ENCODE measurements at regions of chr16 and their contacts with region 1.

Region 1: DNA sequence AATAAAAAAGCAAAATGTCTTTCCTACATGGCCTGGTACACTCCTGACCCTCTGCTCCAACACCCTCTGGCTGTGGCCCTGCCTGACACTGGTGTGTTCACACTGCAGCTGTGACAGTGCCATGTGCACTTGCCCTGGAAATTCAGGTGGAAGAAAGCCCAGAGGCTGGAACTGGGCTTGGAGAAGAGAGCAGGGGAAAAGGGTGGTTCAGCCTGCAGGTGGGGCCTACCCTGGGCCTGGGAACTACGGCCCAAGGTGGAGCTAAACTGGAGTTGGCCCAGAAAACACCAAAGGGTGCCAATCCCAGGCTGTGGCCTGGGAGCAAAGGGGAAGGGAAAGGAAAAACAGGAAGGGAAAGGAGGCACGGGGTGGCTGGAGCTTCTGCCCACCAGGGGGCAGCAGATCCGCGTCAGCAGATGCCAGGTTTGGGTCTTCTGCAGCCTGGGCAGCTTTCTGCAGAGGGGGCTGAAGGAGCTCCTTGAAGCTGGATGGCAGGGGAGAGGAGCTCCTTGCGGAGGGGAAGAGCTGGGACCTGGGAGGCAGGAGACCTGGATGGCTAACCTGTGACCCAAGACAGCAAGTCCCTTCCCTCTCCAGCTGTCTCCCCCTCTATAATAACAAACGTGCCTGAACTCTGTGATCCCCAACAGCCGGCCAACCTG is 15.4 kb upstream of the CTCF start:
- DNase-seq: peak; percentile 66 to 73 (median 69)
- H3K4me3 ChIP-seq: peak overlapping the region; percentile 41 to 48
- H3K4me3 Mint-ChIP-seq: peak overlapping the region; percentile 58 to 91 (median 82)
- H3K27ac ChIP-seq: peak overlapping the region; percentile 42
- H3K27ac Mint-ChIP-seq: peak overlapping the region; percentile 60 to 96 (median 95)
- H3K4me1 ChIP-seq: peaks cover 43% of the 10 kb centered on the region
- H3K4me1 Mint-ChIP-seq: peaks cover 29 to 65% (median 38%) of the 10 kb centered on the region in 4 donors
- H3K27me3 ChIP-seq: no peaks in the 10 kb centered on the region
- H3K27me3 Mint-ChIP-seq: no peaks in the 10 kb centered on the region

Region 2: DNA sequence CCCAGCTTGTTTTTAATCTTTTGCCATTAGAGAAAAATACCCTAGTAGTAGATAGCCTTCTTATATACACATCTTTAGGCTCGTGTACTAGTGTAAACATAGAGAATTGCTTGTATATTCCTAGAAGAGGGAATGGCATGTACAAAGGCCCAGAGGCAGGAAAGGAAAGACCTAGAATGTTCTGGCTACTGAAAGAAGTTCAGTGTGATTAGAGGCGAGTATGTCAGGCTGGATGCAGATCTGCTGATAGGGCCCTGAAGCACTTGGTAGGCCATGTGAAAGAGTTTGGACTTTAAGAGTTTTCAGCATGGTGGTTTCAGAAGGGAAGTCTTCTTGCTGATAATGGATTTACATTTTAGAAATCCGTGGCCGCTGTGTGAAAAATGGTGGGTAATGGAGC is 32.8 kb after region 1 on chr16:
- CTCF ChIA-PET with region 1: interaction called, 12 read pairs
- POLR2A ChIA-PET with region 1: no interaction called
- intact Hi-C with region 1: no loop called
- DNase-seq: no peak
- H3K4me3 ChIP-seq: no peak overlapping the region
- H3K4me3 Mint-ChIP-seq: no peak overlapping the region
- H3K27ac ChIP-seq: no peak overlapping the region
- H3K27ac Mint-ChIP-seq: peak overlapping the region in 6 of 7 donors; percentile 5 to 71 (median 36)
- H3K4me1 ChIP-seq: peaks cover 7% of the 10 kb centered on the region
- H3K4me1 Mint-ChIP-seq: peaks cover 15 to 29% (median 19%) of the 10 kb centered on the region in 4 donors
- H3K27me3 ChIP-seq: no peaks in the 10 kb centered on the region
- H3K27me3 Mint-ChIP-seq: no peaks in the 10 kb centered on the region

Region 3: GRCh38 chr16:67613808-67614207 is 66.9 kb after region 1 on chr16:
- CTCF ChIA-PET with region 1: interaction called, 11 read pairs
- POLR2A ChIA-PET with region 1: no interaction called
- intact Hi-C with region 1: no loop called
- DNase-seq: no peak
- H3K4me3 ChIP-seq: no peak overlapping the region
- H3K4me3 Mint-ChIP-seq: no peak overlapping the region
- H3K27ac ChIP-seq: no peak overlapping the region
- H3K27ac Mint-ChIP-seq: peak overlapping the region in 1 of 7 donors; percentile 7
- H3K4me1 ChIP-seq: no peaks in the 10 kb centered on the region
- H3K4me1 Mint-ChIP-seq: peaks cover 0 to 5% (median 2%) of the 10 kb centered on the region in 4 donors
- H3K27me3 ChIP-seq: no peaks in the 10 kb centered on the region
- H3K27me3 Mint-ChIP-seq: no peaks in the 10 kb centered on the region

Region 4: GRCh38 chr16:67641779-67642708 is 95.2 kb after region 1 on chr16:
- CTCF ChIA-PET with region 1: interaction called, 329 read pairs
- POLR2A ChIA-PET with region 1: interaction called, 190 read pairs
- intact Hi-C with region 1: loop called (anchors 1 kb)
- DNase-seq: no peak
- H3K4me3 ChIP-seq: no peak overlapping the region
- H3K4me3 Mint-ChIP-seq: no peak overlapping the region
- H3K27ac ChIP-seq: no peak overlapping the region
- H3K27ac Mint-ChIP-seq: peak overlapping the region in 1 of 7 donors; percentile 13
- H3K4me1 ChIP-seq: peaks cover 30% of the 10 kb centered on the region
- H3K4me1 Mint-ChIP-seq: peaks cover 2 to 28% (median 11%) of the 10 kb centered on the region in 4 donors
- H3K27me3 ChIP-seq: no peaks in the 10 kb centered on the region
- H3K27me3 Mint-ChIP-seq: no peaks in the 10 kb centered on the region

Region 5: DNA sequence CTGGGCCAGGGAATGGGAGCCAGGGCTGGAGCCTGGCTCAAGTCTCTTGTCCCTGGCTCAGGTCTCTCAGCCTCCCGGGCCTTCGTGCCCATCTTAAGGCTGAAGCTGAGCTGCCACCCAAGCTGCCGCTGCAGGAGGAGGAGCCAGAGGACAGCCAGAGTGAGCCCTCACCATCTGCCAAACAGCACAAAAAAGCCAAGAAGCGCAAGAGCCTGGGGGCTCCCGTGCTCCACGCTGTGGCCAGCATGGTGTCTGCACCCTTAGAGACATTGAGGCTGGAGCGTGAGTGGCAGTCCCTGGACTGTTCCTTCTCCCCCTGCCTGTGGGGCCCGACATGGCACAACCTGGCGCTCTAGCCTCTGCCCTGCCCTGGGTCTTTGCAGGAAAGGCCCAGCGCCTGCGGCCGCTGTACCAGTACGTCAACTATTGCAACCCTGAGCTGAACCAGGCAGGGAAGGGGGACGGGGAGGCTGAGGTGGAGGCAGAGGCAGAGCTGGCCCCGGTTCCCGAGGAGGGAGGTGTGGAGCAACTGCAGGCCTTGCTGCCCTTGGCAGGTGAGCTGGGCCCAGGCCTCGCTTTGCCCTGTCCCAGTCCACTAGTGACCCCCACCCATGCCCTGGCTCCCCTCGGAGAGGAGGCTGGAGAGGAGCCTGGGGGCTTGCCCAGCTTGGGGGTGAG is 121.1 kb after region 1 on chr16:
- CTCF ChIA-PET with region 1: interaction called, 89 read pairs
- POLR2A ChIA-PET with region 1: interaction called, 30 read pairs
- intact Hi-C with region 1: loop called (anchors 1 kb)
- DNase-seq: peak; percentile 78 to 90 (median 82)
- H3K4me3 ChIP-seq: peak overlapping the region in 1 of 2 donors; percentile 89
- H3K4me3 Mint-ChIP-seq: peak overlapping the region; percentile 40 to 92 (median 63)
- H3K27ac ChIP-seq: peak overlapping the region; percentile 64
- H3K27ac Mint-ChIP-seq: peak overlapping the region in 6 of 7 donors; percentile 41 to 75 (median 62)
- H3K4me1 ChIP-seq: peaks cover 24% of the 10 kb centered on the region
- H3K4me1 Mint-ChIP-seq: peaks cover 8 to 49% (median 15%) of the 10 kb centered on the region in 4 donors
- H3K27me3 ChIP-seq: no peaks in the 10 kb centered on the region
- H3K27me3 Mint-ChIP-seq: no peaks in the 10 kb centered on the region

Measured in CD4-positive, alpha-beta memory T cell (primary cell).